GM23248 (cell line): ENCODE measurements at regions of chr3 and their contacts with region 1.

Region 1: DNA sequence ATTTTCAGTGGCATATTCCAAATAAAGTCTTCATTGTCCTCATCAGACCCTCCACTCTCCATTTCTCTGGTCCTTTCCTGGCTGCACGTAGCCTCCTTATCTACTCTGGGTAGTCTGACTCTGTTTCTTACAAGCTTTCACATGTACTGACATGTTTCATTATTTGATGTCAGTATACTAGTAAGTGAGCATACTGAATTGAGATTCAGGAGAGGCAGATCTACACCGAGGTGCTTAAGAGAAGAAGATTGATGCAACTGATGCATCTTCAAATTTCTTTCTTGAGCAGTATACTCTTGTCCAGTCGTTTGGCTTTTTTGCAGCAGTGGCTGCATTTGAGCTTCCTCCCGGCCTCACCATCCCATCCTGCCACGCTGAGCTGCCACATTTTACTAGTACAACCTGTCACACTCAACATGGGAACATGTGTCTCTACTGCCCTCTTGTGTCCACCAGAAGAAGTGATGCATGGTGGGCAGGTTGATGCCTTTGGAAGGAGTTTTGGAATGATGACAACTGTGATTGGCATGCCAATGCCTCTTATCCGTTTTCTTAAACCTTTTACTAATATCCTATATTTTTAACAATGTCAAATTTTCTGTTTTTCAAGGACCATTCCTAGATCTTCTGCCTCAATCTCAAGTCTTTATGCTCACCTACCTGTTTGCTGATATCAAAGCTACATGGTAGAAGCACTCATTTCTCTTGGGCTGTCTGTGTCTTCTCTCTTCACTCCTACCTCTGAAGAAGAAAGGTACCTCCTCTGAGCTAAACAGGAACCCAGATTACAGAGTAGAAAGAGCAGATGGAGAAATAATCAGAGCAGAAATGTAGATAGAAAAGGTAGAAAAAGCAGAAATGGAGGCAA is 38.7 kb downstream of the GUCA1C start:
- DNase-seq: peak; percentile 62
- H3K4me3 ChIP-seq: no peak overlapping the region
- H3K27ac ChIP-seq: no peak overlapping the region
- H3K4me1 ChIP-seq: no peaks in the 10 kb centered on the region
- H3K27me3 ChIP-seq: 0 out of 2 replicates have a peak, but pooled peaks cover 3% of the 10 kb centered on the region

Region 2: GRCh38 chr3:108662130-108662738 is 252.8 kb before region 1 on chr3:
- in situ Hi-C with region 1: loop called (anchors 10 kb)
- DNase-seq: peak; percentile 86
- H3K4me3 ChIP-seq: peak overlapping the region; percentile 41; the same call in 1 of the 2 replicates
- H3K27ac ChIP-seq: no peak overlapping the region
- H3K4me1 ChIP-seq: no peaks in the 10 kb centered on the region
- H3K27me3 ChIP-seq: no peaks in the 10 kb centered on the region

Region 3: DNA sequence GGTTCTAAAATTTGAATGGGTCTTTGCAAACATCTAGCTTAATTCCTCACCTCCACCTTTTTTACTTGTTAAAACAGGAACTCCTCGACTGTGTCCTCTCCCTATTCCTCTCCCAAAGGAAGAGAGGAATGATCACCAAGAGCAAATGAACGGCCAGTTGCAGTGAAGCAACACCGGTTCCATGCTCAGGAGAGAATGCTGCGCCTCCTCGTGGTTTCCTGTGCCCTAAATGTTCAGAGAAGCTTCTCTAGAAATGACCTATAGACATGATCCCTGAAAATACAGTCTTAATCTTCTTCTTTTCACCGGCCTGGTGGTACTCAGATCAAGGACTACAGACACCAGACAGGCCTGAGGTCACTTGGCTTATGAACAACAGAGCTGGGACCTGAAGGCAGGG is 103.8 kb after region 1 on chr3:
- in situ Hi-C with region 1: no loop called
- DNase-seq: peak; percentile 17
- H3K4me3 ChIP-seq: no peak overlapping the region
- H3K27ac ChIP-seq: no peak overlapping the region
- H3K4me1 ChIP-seq: no peaks in the 10 kb centered on the region
- H3K27me3 ChIP-seq: 0 out of 2 replicates have a peak, but pooled peaks cover 7% of the 10 kb centered on the region